ENCODE measurements at regions of chr1 and their contacts with region 1.

Region 1: GRCh38 chr1:9629445-9630201 is 21.9 kb upstream of the PIK3CD start:
- DNase-seq: peak; percentile 73 to 82 (median 78)
- H3K4me3 ChIP-seq: peak overlapping the region; percentile 95
- H3K4me3 Mint-ChIP-seq: peak overlapping the region; percentile 87 to 96 (median 92)
- H3K27ac ChIP-seq: peak overlapping the region; percentile 75
- H3K27ac Mint-ChIP-seq: peak overlapping the region; percentile 81 to 98 (median 88)
- H3K4me1 ChIP-seq: peaks cover 78% of the 10 kb centered on the region
- H3K4me1 Mint-ChIP-seq: peaks cover 29 to 85% (median 52%) of the 10 kb centered on the region in 4 donors
- H3K27me3 ChIP-seq: no peaks in the 10 kb centered on the region
- H3K27me3 Mint-ChIP-seq: no peaks in the 10 kb centered on the region

Region 2: GRCh38 chr1:9643351-9644256 is 14.0 kb after region 1 on chr1:
- CTCF ChIA-PET with region 1: interaction called, 47 read pairs
- POLR2A ChIA-PET with region 1: interaction called, 658 read pairs
- intact Hi-C with region 1: no loop called
- DNase-seq: peak in 1 of 5 donors; percentile 9
- H3K4me3 ChIP-seq: no peak overlapping the region
- H3K4me3 Mint-ChIP-seq: peak overlapping the region in 7 of 8 donors; percentile 47 to 81 (median 62)
- H3K27ac ChIP-seq: no peak overlapping the region
- H3K27ac Mint-ChIP-seq: peak overlapping the region; percentile 57 to 85 (median 78)
- H3K4me1 ChIP-seq: peaks cover 39% of the 10 kb centered on the region
- H3K4me1 Mint-ChIP-seq: peaks cover 33 to 71% (median 49%) of the 10 kb centered on the region in 4 donors
- H3K27me3 ChIP-seq: no peaks in the 10 kb centered on the region
- H3K27me3 Mint-ChIP-seq: no peaks in the 10 kb centered on the region

Region 3: GRCh38 chr1:9676815-9677393 is 47.3 kb after region 1 on chr1:
- CTCF ChIA-PET with region 1: interaction called, 11 read pairs
- POLR2A ChIA-PET with region 1: interaction called, 7 read pairs
- intact Hi-C with region 1: no loop called
- DNase-seq: no peak
- H3K4me3 ChIP-seq: no peak overlapping the region
- H3K4me3 Mint-ChIP-seq: peak overlapping the region in 5 of 8 donors; percentile 0 to 42 (median 37)
- H3K27ac ChIP-seq: no peak overlapping the region
- H3K27ac Mint-ChIP-seq: peak overlapping the region; percentile 70 to 90 (median 82)
- H3K4me1 ChIP-seq: peaks cover 71% of the 10 kb centered on the region
- H3K4me1 Mint-ChIP-seq: peaks cover 33 to 74% (median 52%) of the 10 kb centered on the region in 4 donors
- H3K27me3 ChIP-seq: no peaks in the 10 kb centered on the region
- H3K27me3 Mint-ChIP-seq: no peaks in the 10 kb centered on the region

Region 4: DNA sequence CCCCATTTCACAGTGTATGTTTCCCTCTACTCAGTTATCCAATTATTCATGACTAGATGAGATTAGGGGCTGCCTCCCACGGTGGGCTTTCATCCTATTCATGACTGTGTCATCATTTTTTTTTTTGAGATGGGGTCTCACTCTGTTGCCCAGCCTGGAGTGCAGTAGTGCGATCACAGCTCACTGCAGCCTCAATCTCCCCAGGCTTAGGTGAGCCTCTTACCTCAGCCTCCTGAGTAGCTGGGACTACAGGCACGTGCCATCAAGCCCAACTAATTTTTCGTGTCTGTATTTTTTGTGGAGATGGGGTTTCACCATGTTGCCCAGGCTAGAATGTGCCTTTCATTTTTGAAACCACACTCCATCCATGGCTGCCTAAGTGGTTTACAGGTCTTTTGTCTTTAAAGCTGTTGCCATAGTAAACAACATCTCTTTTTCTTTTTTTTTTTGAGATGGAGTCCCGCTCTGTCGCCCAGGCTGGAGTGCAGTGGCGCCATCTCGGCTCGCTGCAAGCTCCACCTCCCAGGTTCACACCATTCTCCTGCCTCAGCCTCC is 81.9 kb after region 1 on chr1:
- CTCF ChIA-PET with region 1: interaction called, 219 read pairs
- POLR2A ChIA-PET with region 1: interaction called, 403 read pairs
- intact Hi-C with region 1: no loop called
- DNase-seq: peak in 2 of 5 donors; percentile 33 to 48
- H3K4me3 ChIP-seq: no peak overlapping the region
- H3K4me3 Mint-ChIP-seq: peak overlapping the region in 2 of 8 donors; percentile 26 to 36
- H3K27ac ChIP-seq: no peak overlapping the region
- H3K27ac Mint-ChIP-seq: peak overlapping the region; percentile 35 to 76 (median 73)
- H3K4me1 ChIP-seq: peaks cover 55% of the 10 kb centered on the region
- H3K4me1 Mint-ChIP-seq: peaks cover 25 to 77% (median 48%) of the 10 kb centered on the region in 4 donors
- H3K27me3 ChIP-seq: no peaks in the 10 kb centered on the region
- H3K27me3 Mint-ChIP-seq: no peaks in the 10 kb centered on the region

Region 5: GRCh38 chr1:9784508-9785133 is 155.0 kb after region 1 on chr1:
- CTCF ChIA-PET with region 1: interaction called, 49 read pairs
- POLR2A ChIA-PET with region 1: interaction called, 4 read pairs
- intact Hi-C with region 1: loop called (anchors 1 kb)
- DNase-seq: peak; percentile 70 to 75 (median 72)
- H3K4me3 ChIP-seq: no peak overlapping the region
- H3K4me3 Mint-ChIP-seq: peak overlapping the region in 2 of 8 donors; percentile 29 to 61
- H3K27ac ChIP-seq: no peak overlapping the region
- H3K27ac Mint-ChIP-seq: peak overlapping the region in 5 of 7 donors; percentile 18 to 64 (median 42)
- H3K4me1 ChIP-seq: peaks cover 38% of the 10 kb centered on the region
- H3K4me1 Mint-ChIP-seq: peaks cover 22 to 42% (median 27%) of the 10 kb centered on the region in 4 donors
- H3K27me3 ChIP-seq: no peaks in the 10 kb centered on the region
- H3K27me3 Mint-ChIP-seq: no peaks in the 10 kb centered on the region

Region 6: DNA sequence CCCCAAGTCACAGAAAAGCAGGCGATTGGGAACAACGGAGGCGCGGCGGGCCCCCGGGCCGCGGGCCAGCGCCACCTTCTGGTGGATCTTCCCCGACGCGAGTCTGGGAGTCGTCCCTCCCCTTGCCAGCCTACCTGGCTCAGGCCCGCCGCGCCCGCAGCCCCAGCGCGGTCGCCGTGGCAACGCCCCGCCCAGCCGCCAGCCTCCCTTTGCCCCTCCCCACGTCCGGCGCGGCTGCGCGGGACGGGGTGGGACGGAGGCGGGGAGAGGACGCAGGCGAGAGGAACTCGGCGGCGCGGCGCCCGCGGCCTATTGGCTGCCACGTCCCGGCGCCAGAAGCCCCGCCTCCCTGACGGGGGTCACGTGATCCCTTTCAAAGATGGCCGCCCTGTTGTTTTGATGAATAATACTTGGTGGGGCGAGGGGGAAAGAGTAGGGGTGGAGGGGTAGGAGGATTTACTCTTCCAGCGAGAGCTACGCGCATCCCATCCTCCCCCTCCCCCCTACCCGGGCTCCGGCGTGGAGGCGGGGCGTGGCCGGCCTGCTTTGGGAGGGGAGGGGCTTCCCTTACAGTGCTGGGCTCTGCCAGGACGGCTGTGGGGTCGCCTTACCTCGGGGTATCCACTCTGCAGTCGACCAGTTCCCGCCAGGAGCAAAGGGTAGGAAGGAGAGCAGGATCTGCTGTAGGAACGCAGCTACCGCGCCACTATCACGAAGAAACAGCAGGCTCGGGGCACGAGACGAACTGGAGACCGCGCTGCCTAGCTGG is 403.2 kb after region 1 on chr1 and contains the start of gene UBE4B:
- CTCF ChIA-PET with region 1: no interaction called
- POLR2A ChIA-PET with region 1: no interaction called
- intact Hi-C with region 1: loop called (anchors 2 kb)
- DNase-seq: peak; percentile 99 to 100 (median 99)
- H3K4me3 ChIP-seq: peak within 1 kb of the TSS; percentile 92 to 96
- H3K4me3 Mint-ChIP-seq: peak within 1 kb of the TSS; percentile 93 to 98 (median 95)
- H3K27ac ChIP-seq: peak within 1 kb of the TSS; percentile 84
- H3K27ac Mint-ChIP-seq: peak within 1 kb of the TSS; percentile 92 to 98 (median 97)
- H3K4me1 ChIP-seq: peaks cover 22% of the 10 kb centered on the region
- H3K4me1 Mint-ChIP-seq: peaks cover 15 to 32% (median 25%) of the 10 kb centered on the region in 4 donors
- H3K27me3 ChIP-seq: no peaks in the 10 kb centered on the region
- H3K27me3 Mint-ChIP-seq: peaks cover 0 to 1% of the 10 kb centered on the region in 2 donors
- total RNA-seq, gene UBE4B: 44.1 to 47.6 TPM

Measured in CD4-positive, alpha-beta memory T cell (primary cell).